Heart left ventricle (tissue), 16 donors: ENCODE measurements at regions of chr12 and their contacts with region 1.

Region 1: GRCh38 chr12:124388679-124389536 is 94.0 kb downstream of the RFLNA start:
- DNase-seq: peak; percentile 89 to 93 (median 93)
- ATAC-seq: peak; percentile 21 to 67 (median 59)
- H3K4me3 ChIP-seq: peak overlapping the region; percentile 33 to 81 (median 64)
- H3K27ac ChIP-seq: peak overlapping the region; percentile 73 to 99 (median 96)
- H3K4me1 ChIP-seq: peaks cover 23 to 98% (median 90%) of the 10 kb centered on the region in 12 donors
- H3K27me3 ChIP-seq: no peaks in the 10 kb centered on the region
- CTCF ChIP-seq: peak in 3 of 12 donors; percentile 9 to 34 (median 22)
- POLR2A ChIP-seq: peak in 1 of 2 donors; percentile 52

Region 2: GRCh38 chr12:124453419-124454351 is 64.8 kb after region 1 on chr12:
- intact Hi-C with region 1: no loop called
- DNase-seq: peak; percentile 90 to 96 (median 92)
- ATAC-seq: peak; percentile 82 to 90 (median 82)
- H3K4me3 ChIP-seq: peak overlapping the region in 8 of 12 donors; percentile 2 to 38 (median 19)
- H3K27ac ChIP-seq: peak overlapping the region; percentile 37 to 94 (median 90)
- H3K4me1 ChIP-seq: peaks cover 19 to 82% (median 66%) of the 10 kb centered on the region in 12 donors
- H3K27me3 ChIP-seq: no peaks in the 10 kb centered on the region
- CTCF ChIP-seq: peak in 4 of 12 donors; percentile 2 to 31 (median 23)
- POLR2A ChIP-seq: no peak

Region 3: DNA sequence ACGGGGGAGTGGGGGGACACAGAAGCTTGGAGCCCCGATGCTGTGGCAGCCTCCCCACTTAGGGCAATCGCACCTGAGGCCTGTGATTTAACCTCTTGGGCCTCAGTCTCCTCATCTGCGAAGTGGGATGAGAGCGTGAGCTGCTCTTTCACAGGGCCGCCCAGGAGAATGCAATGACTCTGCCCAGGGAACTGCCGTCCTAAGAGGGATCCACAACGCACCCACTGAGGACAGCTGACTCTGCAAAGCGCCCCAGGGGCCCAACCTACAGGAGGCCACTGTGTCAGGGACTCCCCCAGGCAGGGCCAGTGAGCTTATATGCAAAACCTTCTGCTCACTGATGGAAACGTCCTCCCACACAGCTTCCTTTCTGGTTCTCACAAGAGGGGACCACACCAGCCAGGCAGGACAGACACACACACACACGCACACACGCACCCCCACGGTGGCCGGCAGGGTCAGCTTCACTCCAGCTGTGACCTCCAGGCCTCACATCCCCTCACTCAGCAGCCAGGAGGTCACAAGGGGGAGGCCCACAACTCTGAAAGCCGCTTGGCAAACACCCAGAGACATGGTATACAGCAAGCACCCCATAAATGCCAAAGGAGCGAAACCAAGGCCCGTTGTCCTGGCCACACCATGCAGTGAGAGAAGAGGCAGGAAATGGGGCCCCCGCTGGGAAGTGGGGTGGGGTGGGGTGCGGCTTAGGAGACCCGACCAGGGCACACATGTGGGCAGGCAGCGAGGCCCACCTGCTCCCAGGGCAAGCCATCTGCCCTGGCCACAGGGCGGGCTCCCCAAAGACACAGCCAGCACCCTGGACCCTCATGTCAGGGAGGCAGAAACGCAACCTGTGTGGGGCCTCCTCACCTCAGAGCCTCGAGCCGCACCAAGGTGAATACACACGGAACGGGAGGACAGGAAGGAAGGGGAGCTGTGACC is 105.2 kb after region 1 on chr12:
- intact Hi-C with region 1: loop called in 2 of 10 experiments (anchors 5 to 10 kb)
- DNase-seq: peak in 1 of 5 donors; percentile 47
- ATAC-seq: no peak
- H3K4me3 ChIP-seq: no peak overlapping the region
- H3K27ac ChIP-seq: no peak overlapping the region
- H3K4me1 ChIP-seq: peaks cover 31 to 91% (median 72%) of the 10 kb centered on the region in 12 donors
- H3K27me3 ChIP-seq: no peaks in the 10 kb centered on the region
- CTCF ChIP-seq: no peak
- POLR2A ChIP-seq: no peak